K562 (cell line): ENCODE measurements at regions of chr6 and their contacts with region 1.

Region 1: GRCh38 chr6:147202516-147203312 is 1.5 kb upstream of the STXBP5 start:
- DNase-seq: peak; percentile 93 to 99 (median 96)
- ATAC-seq: peak; percentile 78
- H3K4me3 ChIP-seq: peak overlapping the region; percentile 88
- H3K27ac ChIP-seq: peak overlapping the region; percentile 88
- H3K4me1 ChIP-seq: peaks cover 5 to 14% of the 10 kb centered on the region in 2 experiments
- H3K27me3 ChIP-seq: no peaks in the 10 kb centered on the region
- CTCF ChIP-seq: no peak
- EP300 ChIP-seq: no peak; the same call in 1 of the 2 replicates
- POLR2A ChIP-seq: peak; percentile 99
- RAD21 ChIP-seq: no peak; a peak in 2 of 4 replicates

Region 2: DNA sequence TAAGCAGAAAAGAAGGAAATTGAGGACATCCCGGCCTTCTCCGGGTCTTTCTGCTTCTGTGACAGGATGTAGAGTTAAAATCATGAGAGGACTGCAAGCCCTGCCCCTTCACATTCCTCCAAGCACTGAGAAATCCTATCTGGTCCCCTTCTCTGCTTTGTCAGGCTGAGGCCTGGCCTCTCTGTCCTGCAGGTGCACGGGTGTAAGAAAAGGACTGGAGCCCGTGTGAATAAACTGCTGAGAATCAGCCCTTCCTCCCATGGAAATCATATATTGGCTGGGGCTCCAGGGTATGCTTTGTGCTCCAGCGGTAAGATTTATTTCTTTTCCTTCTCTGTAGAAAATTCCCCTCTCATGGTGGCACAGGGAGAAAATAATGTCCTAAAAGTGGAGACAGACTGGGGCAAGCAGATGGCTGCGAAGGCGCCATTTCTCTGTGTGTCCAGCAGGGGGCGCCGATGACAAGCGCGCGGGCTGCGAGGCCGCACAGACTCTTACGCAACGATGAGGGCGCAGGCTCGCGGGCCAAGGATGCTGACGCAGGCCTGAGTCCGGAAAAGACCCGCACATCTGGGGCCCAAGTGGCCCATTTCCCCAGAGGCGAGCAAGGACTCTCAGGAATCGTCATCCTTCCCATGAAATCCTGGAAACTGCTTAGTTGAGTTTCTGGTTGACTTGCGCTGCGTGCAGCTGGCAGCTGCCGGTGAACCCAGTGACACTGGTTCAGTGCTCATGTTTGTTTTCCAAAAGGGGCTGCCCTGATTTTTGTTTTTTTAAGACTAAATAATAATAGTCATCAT is 345.3 kb before region 1 on chr6:
- CTCF ChIA-PET with region 1: no interaction called
- POLR2A ChIA-PET with region 1: no interaction called
- in situ Hi-C with region 1: no loop called
- intact Hi-C with region 1: loop called (anchors 2 kb)
- DNase-seq: peak; percentile 85 to 96 (median 86)
- ATAC-seq: peak; percentile 86
- H3K4me3 ChIP-seq: peak overlapping the region; percentile 54
- H3K27ac ChIP-seq: peak overlapping the region; percentile 71
- H3K4me1 ChIP-seq: peaks cover 9 to 28% of the 10 kb centered on the region in 2 experiments
- H3K27me3 ChIP-seq: no peaks in the 10 kb centered on the region
- CTCF ChIP-seq: peak; percentile 96 to 99 (median 98)
- EP300 ChIP-seq: peak; percentile 79
- POLR2A ChIP-seq: peak; percentile 68
- RAD21 ChIP-seq: peak; percentile 99

Region 3: DNA sequence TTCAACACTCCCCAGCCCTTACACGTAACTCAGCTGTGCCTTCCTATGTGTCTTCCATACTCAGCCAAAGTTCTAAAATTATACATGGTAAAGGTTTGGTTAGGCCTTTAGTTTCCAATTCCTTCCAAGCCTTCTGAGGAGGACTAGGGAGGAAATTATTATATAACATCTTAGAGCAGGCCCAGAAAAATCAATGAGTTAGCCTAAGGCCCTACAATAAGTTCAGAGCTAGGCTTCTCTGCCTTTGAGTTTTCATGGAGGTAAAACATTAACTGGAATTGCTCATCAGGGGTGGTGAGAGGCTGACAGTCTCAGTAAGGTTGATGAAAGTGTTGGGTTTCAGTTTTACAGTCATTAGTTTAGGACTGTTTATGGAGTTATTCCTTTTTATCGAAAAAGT is 318.0 kb before region 1 on chr6:
- CTCF ChIA-PET with region 1: no interaction called
- POLR2A ChIA-PET with region 1: interaction called, 5 read pairs
- in situ Hi-C with region 1: loop called (anchors 25 kb)
- intact Hi-C with region 1: loop called (anchors 1 kb)
- DNase-seq: peak in 1 of 4 experiments; percentile 75
- ATAC-seq: peak; percentile 27
- H3K4me3 ChIP-seq: peak overlapping the region; percentile 31
- H3K27ac ChIP-seq: peak overlapping the region; percentile 89
- H3K4me1 ChIP-seq: peaks cover 45 to 83% of the 10 kb centered on the region in 2 experiments
- H3K27me3 ChIP-seq: no peaks in the 10 kb centered on the region
- CTCF ChIP-seq: no peak; a peak in 1 of 6 replicates
- EP300 ChIP-seq: no peak
- POLR2A ChIP-seq: no peak
- RAD21 ChIP-seq: no peak

Region 4: GRCh38 chr6:146913842-146914488 is 288.7 kb before region 1 on chr6:
- CTCF ChIA-PET with region 1: no interaction called
- POLR2A ChIA-PET with region 1: interaction called, 14 read pairs
- in situ Hi-C with region 1: no loop called
- intact Hi-C with region 1: loop called (anchors 1 kb)
- DNase-seq: peak; percentile 77 to 94 (median 82)
- ATAC-seq: peak; percentile 86
- H3K4me3 ChIP-seq: peak overlapping the region; percentile 10; the same call in 1 of the 2 replicates
- H3K27ac ChIP-seq: peak overlapping the region; percentile 96
- H3K4me1 ChIP-seq: peaks cover 4 to 85% of the 10 kb centered on the region in 2 experiments; a peak in 4 of 5 replicates
- H3K27me3 ChIP-seq: no peaks in the 10 kb centered on the region
- CTCF ChIP-seq: no peak
- EP300 ChIP-seq: no peak; the same call in 1 of the 2 replicates
- POLR2A ChIP-seq: peak; percentile 73
- RAD21 ChIP-seq: peak in 1 of 2 experiments; percentile 39; a peak in 3 of 4 replicates

Region 5: GRCh38 chr6:147192302-147192771 is 10.4 kb before region 1 on chr6:
- CTCF ChIA-PET with region 1: no interaction called
- POLR2A ChIA-PET with region 1: interaction called, 20 read pairs
- in situ Hi-C with region 1: no loop called
- intact Hi-C with region 1: no loop called
- DNase-seq: no peak
- ATAC-seq: peak; percentile 3; the same call in 2 of the 3 replicates
- H3K4me3 ChIP-seq: no peak overlapping the region
- H3K27ac ChIP-seq: no peak overlapping the region; the same call in 2 of the 3 replicates
- H3K4me1 ChIP-seq: peaks cover 11 to 50% of the 10 kb centered on the region in 2 experiments; a peak in 4 of 5 replicates
- H3K27me3 ChIP-seq: no peaks in the 10 kb centered on the region
- CTCF ChIP-seq: no peak
- EP300 ChIP-seq: peak; percentile 87
- POLR2A ChIP-seq: no peak
- RAD21 ChIP-seq: no peak